A673 (cell line): ENCODE measurements at regions of chr16 and their contacts with region 1.

Region 1: DNA sequence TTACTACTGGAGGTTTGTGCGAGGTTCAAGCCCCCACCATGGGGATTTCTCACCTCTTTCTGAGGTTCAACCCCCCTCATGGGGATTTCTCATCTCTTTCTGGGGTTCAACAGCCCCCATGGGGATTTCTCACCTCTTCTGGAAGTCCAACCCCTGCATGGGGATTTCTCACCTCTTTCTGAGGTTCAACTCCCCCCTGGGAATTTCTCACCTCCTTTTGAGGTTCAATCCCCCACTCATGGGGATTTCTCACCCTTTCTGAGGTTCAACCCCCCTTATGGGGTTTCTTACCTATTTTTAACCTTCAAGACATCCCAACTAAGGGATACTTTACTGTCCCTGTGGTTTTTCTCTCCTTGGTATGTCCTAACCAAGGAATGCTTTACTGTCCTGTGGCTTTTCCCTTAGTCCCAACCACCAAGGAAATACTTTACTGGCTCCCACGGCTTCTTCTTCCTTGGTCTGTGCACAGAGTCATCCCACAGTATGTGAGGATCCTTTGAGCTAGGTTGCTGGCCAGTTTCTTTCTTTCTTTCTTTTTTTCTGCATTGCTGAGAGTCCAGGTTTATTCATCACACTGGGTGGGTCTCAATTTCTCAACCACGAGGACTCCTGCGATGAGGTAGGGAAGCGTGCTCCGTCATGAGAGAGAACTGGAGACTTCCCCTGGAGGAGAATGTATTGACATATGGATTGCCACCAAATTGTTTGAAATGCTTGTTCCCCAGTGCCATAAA is 2140.2 kb downstream of the TP53TG3F start:
- DNase-seq: no peak
- H3K4me3 ChIP-seq: no peak overlapping the region
- H3K27ac ChIP-seq: no peak overlapping the region
- H3K4me1 ChIP-seq: no peaks in the 10 kb centered on the region
- H3K27me3 ChIP-seq: no peaks in the 10 kb centered on the region
- CTCF ChIP-seq: no peak

Region 2: DNA sequence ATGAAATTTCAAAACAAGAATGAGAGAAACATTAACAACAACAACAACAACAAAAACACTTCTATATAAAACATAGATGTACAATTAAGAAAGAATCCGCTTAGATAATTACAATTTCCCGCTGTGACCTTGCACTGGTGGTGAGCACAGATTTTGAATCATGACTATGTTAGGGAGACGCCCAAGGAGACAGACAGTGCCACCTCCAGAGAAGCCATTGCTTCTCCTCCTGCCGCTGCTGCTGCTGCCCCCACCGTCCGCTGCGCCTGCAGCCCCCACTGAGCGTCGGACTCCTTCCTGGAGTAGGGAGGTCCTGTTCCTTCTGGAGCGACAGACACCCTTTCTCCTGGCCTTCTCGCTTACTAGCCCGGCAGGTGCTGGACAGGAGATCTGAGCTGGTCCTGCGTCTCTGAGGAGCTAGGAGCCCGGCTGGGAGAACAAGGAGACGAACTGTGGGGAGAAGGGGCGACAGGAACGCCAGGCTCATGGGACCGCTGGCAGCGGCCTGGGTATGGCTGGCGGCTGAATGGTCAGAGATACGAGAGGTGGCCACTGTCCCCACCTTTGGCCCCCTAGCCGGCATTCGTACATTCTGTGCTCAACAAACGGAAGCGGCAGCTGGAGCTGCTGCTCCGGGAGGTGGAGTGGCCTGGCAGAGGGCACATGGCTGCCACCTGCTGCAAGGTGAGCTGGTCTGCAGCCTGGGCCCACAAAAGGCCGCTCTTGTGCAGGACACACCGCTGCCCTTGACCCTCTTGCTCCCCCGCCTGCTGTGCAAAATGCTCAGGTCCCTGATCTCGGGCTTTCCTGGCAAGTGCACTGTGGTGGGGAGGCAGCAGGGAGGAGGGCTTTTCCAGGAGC is 73.6 kb before region 1 on chr16:
- CTCF ChIA-PET with region 1: no interaction called
- POLR2A ChIA-PET with region 1: no interaction called
- intact Hi-C with region 1: loop called (anchors 10 kb)
- DNase-seq: no peak
- H3K4me3 ChIP-seq: no peak overlapping the region
- H3K27ac ChIP-seq: no peak overlapping the region
- H3K4me1 ChIP-seq: no peaks in the 10 kb centered on the region
- H3K27me3 ChIP-seq: no peaks in the 10 kb centered on the region
- CTCF ChIP-seq: no peak

Region 3: GRCh38 chr16:35543486-35543885 is 56.1 kb before region 1 on chr16:
- CTCF ChIA-PET with region 1: no interaction called
- POLR2A ChIA-PET with region 1: no interaction called
- intact Hi-C with region 1: no loop called
- DNase-seq: no peak
- H3K4me3 ChIP-seq: no peak overlapping the region
- H3K27ac ChIP-seq: no peak overlapping the region
- H3K4me1 ChIP-seq: no peaks in the 10 kb centered on the region
- H3K27me3 ChIP-seq: no peaks in the 10 kb centered on the region
- CTCF ChIP-seq: no peak

Region 4: DNA sequence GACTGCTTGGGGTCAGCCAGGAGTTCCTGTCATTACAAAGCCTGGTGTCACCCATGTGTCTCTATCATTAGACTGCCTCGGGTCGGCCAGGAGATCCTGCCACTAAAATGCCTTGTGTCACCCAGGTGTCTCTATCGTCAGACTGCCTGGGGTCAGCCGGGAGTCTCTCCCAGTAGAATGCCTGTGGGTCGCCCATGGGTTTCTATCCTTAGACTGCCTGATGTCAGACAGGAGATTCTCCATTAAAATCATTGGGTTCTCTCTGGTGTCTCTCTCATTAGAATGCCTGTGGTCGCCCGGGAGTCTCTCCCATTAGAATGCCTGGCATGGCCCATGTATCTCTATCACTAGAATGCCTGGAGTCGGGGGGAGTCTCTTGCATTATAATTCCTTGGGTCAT is 90.8 kb after region 1 on chr16:
- CTCF ChIA-PET with region 1: no interaction called
- POLR2A ChIA-PET with region 1: no interaction called
- intact Hi-C with region 1: loop called (anchors 5 kb)
- DNase-seq: no peak
- H3K4me3 ChIP-seq: no peak overlapping the region
- H3K27ac ChIP-seq: no peak overlapping the region
- H3K4me1 ChIP-seq: no peaks in the 10 kb centered on the region
- H3K27me3 ChIP-seq: no peaks in the 10 kb centered on the region
- CTCF ChIP-seq: no peak